ENCODE measurements at regions of chr19 and their contacts with region 1.

Region 1: GRCh38 chr19:38634757-38635482 is 12.5 kb upstream of the ACTN4 start:
- DNase-seq: peak; percentile 49 to 84 (median 73)
- ATAC-seq: peak; percentile 30
- H3K4me3 ChIP-seq: no peak overlapping the region
- H3K4me3 Mint-ChIP-seq: peak overlapping the region; percentile 47
- H3K27ac ChIP-seq: peak overlapping the region in 1 of 2 experiments; percentile 63
- H3K27ac Mint-ChIP-seq: peak overlapping the region; percentile 46
- H3K4me1 ChIP-seq: peaks cover 26% of the 10 kb centered on the region
- H3K4me1 Mint-ChIP-seq: peaks cover 24% of the 10 kb centered on the region
- H3K27me3 ChIP-seq: no peaks in the 10 kb centered on the region
- H3K27me3 Mint-ChIP-seq: no peaks in the 10 kb centered on the region
- CTCF ChIP-seq: peak; percentile 88

Region 2: DNA sequence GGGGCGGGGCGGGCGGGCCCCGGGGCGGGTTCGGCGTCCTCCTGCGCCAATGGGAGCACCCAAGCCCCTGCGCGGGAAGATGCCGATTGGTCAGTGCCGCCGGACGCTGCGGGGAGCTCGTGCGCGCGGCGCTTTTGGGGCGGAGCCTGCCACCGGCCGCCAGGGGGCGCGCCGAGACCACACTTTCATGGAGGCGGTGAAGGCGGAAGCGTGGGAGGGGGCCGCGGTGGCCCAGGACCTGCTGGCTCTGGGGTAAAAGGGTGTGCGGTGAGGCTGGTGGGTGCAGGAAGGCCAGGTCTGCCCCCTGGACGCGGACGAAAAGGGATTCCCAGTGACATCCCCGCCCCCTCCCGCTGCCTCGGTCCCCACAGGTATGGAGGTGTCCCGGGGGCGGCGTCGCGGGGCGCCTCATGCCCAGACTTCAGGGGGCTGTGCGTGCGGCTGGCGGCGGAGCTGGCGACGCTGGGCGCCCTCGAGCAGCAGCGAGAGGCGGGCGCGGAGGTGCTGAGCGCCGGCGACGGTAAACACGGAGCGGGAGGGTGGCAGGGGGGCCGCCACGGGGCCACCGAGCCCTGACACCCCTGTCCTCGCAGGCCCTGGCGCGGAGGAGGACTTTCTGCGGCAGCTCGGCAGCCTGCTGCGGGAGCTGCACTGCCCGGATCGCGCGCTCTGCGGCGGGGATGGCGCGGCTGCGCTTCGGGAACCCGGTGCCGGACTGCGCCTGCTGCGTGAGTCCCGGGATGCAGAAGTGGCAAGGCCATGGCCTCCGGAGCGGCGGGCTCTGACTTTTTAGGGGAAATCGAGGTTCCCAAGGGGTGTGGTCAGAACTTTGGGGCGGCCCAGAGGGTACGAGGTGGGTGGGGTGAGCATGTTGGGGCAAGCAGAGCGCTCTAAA is 231.7 kb before region 1 on chr19 and contains the start of gene FAM98C:
- CTCF ChIA-PET with region 1: interaction called, 36 read pairs
- POLR2A ChIA-PET with region 1: interaction called, 8 read pairs
- intact Hi-C with region 1: loop called (anchors 1 kb)
- DNase-seq: peak; percentile 95 to 99 (median 97)
- ATAC-seq: peak; percentile 96
- H3K4me3 ChIP-seq: peak within 1 kb of the TSS; percentile 76 to 95
- H3K4me3 Mint-ChIP-seq: peak within 1 kb of the TSS; percentile 94
- H3K27ac ChIP-seq: peak within 1 kb of the TSS; percentile 79 to 81
- H3K27ac Mint-ChIP-seq: peak within 1 kb of the TSS; percentile 98
- H3K4me1 ChIP-seq: peaks cover 11% of the 10 kb centered on the region
- H3K4me1 Mint-ChIP-seq: peaks cover 15% of the 10 kb centered on the region
- H3K27me3 ChIP-seq: no peaks in the 10 kb centered on the region
- H3K27me3 Mint-ChIP-seq: no peaks in the 10 kb centered on the region
- CTCF ChIP-seq: peak; percentile 95
- total RNA-seq, gene FAM98C: 28.2 to 29.3 TPM

Region 3: DNA sequence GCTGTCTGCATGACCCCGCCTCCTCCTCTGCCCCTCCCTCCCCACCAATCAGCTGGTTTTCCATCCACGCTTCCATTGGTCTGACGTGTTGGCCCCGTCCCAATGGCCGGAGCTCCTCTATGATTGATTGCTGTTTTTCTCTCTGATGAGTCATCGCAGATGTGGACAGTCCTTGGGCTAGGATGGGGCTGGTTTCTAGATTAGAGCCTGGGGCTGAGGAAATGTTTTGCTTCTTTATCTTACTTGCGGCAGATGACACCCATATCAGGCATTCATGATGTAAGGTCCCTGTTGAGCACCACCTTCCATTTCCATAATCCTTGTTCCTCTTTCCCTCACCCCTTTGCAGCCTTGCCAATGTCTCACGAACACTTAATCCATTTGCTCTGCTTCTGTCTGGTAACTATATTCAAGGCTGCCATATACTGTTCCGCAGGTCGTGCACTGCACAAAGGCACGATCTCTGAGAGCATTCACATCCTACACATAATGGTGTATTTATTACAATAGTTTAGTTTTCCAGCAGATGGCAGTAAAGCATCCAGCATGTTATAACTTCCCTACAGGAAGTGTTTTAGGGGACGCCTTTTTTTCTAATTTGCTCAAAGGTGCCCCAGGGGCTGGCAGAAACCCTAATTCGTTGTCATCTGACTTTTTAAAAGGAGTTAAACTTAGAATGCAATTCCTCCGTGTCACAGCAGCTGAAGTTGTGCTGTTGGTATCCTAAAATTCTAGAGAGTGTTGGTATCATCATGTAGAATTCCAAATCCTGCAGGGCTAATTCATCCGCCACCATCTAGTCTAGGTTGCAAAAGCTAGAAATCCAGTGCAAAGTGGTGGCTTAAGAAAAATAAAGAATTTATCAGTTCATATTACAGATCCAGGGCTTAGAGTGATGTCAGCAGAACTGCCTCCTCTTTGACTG is 90.6 kb before region 1 on chr19:
- CTCF ChIA-PET with region 1: interaction called, 32 read pairs
- POLR2A ChIA-PET with region 1: no interaction called
- intact Hi-C with region 1: loop called (anchors 1 kb)
- DNase-seq: peak in 4 of 9 experiments; percentile 16 to 81 (median 64)
- ATAC-seq: peak; percentile 74
- H3K4me3 ChIP-seq: no peak overlapping the region
- H3K4me3 Mint-ChIP-seq: peak overlapping the region; percentile 9
- H3K27ac ChIP-seq: no peak overlapping the region
- H3K27ac Mint-ChIP-seq: no peak overlapping the region
- H3K4me1 ChIP-seq: peaks cover 16% of the 10 kb centered on the region
- H3K4me1 Mint-ChIP-seq: peaks cover 16% of the 10 kb centered on the region
- H3K27me3 ChIP-seq: no peaks in the 10 kb centered on the region
- H3K27me3 Mint-ChIP-seq: no peaks in the 10 kb centered on the region
- CTCF ChIP-seq: peak; percentile 67

Region 4: GRCh38 chr19:38624822-38625221 is 10.1 kb before region 1 on chr19:
- CTCF ChIA-PET with region 1: interaction called, 12 read pairs
- POLR2A ChIA-PET with region 1: interaction called, 5 read pairs
- intact Hi-C with region 1: no loop called
- DNase-seq: no peak
- ATAC-seq: no peak
- H3K4me3 ChIP-seq: no peak overlapping the region
- H3K4me3 Mint-ChIP-seq: no peak overlapping the region
- H3K27ac ChIP-seq: no peak overlapping the region
- H3K27ac Mint-ChIP-seq: no peak overlapping the region
- H3K4me1 ChIP-seq: peaks cover 6% of the 10 kb centered on the region
- H3K4me1 Mint-ChIP-seq: peaks cover 12% of the 10 kb centered on the region
- H3K27me3 ChIP-seq: no peaks in the 10 kb centered on the region
- H3K27me3 Mint-ChIP-seq: no peaks in the 10 kb centered on the region
- CTCF ChIP-seq: no peak

Region 5: GRCh38 chr19:38693380-38694223 is 58.7 kb after region 1 on chr19:
- CTCF ChIA-PET with region 1: interaction called, 3 read pairs
- POLR2A ChIA-PET with region 1: no interaction called
- intact Hi-C with region 1: loop called in 1 of 2 experiments (anchors 5 kb)
- DNase-seq: peak in 8 of 9 experiments; percentile 22 to 84 (median 58)
- ATAC-seq: peak; percentile 74
- H3K4me3 ChIP-seq: peak overlapping the region; percentile 16 to 19
- H3K4me3 Mint-ChIP-seq: peak overlapping the region; percentile 46
- H3K27ac ChIP-seq: peak overlapping the region; percentile 37 to 72
- H3K27ac Mint-ChIP-seq: peak overlapping the region; percentile 79
- H3K4me1 ChIP-seq: peaks cover 33% of the 10 kb centered on the region
- H3K4me1 Mint-ChIP-seq: peaks cover 54% of the 10 kb centered on the region
- H3K27me3 ChIP-seq: no peaks in the 10 kb centered on the region
- H3K27me3 Mint-ChIP-seq: no peaks in the 10 kb centered on the region
- CTCF ChIP-seq: no peak

Region 6: DNA sequence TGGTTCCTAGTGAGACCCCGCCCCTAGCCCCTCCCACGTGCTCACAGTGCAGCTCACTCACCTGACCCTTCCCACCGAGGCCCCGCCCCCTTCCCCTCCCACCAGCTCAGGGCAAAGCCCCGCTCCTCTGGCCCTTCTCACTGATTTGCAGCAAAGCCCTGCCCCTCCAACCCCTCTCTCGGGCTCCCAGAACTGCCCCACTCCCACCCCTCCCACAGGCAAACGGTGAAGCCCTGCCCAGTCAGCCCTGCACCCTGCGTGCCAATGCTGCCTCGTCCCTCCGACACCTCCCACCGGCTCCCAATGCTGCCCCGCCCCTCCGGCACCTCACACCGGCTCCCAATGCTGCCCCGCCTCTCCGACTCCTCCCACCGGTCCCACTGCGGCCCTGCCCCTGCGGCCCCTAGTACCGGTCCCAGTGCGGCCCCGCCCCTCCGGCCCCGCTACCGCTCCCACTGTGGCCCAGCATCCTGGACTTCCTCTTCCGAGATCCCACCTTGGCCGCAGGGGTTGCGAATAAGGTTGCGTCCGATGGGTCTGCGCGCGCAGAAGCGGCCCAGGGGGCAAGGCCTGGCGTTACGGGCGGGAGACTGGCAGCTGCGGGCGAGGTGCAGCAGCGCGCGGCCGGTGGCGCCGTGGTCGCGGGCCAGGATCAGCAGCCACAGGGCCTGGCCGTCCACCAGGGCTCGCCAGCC is 396.6 kb after region 1 on chr19:
- CTCF ChIA-PET with region 1: no interaction called
- POLR2A ChIA-PET with region 1: no interaction called
- intact Hi-C with region 1: no loop called
- DNase-seq: peak; percentile 50 to 85 (median 72)
- ATAC-seq: peak; percentile 89
- H3K4me3 ChIP-seq: peak overlapping the region; percentile 55 to 62
- H3K4me3 Mint-ChIP-seq: peak overlapping the region; percentile 75
- H3K27ac ChIP-seq: no peak overlapping the region
- H3K27ac Mint-ChIP-seq: no peak overlapping the region
- H3K4me1 ChIP-seq: peaks cover 13% of the 10 kb centered on the region
- H3K4me1 Mint-ChIP-seq: peaks cover 11% of the 10 kb centered on the region
- H3K27me3 ChIP-seq: peaks cover 0 to 4% of the 10 kb centered on the region in 2 experiments
- H3K27me3 Mint-ChIP-seq: peaks cover 15% of the 10 kb centered on the region
- CTCF ChIP-seq: no peak

Measured in CD8-positive, alpha-beta T cell (primary cell).